H1 (cell line): ENCODE measurements at regions of chr7 and their contacts with region 1.

Region 1: DNA sequence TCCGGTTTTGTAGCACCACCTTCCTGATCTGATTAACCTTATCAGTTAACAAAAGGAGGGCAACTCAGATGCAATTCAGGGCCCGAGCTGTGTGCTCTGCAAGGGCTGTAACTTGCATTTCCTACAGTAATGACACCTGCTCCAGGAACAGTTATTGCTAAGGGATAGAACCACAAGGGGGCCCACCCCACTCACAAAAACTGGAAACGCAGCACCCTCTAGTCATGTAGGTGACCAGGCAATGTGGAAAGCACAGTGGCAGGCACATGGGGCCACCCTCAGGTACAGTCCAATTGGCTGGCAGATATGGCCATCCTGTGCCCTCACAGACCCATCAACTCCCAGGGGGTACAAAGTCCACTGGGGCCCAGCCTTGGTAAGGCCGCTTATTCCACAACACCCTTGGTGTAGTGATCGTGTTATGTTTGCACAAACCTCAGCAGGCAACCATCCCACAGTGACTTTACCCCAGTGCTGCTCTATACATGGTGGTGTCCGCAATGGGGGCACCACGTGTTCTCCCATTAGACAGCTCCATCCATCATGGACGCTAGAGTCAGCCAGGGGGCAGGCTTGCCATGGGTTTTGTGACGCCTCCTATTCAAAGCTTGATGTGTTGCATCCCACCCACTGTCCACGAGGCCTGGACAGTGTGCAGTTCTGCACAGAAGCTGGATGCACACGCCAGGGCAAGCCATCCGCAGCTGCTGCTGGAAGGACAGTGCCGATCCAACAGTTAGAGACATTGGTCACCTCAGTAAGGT is 9.4 kb downstream of the RNF133 start:
- DNase-seq: no peak
- H3K4me3 ChIP-seq: no peak overlapping the region
- H3K27ac ChIP-seq: no peak overlapping the region
- H3K4me1 ChIP-seq: peaks cover 4 to 14% (median 11%) of the 10 kb centered on the region in 4 experiments; a peak in 6 of 7 replicates
- H3K27me3 ChIP-seq: no peaks in the 10 kb centered on the region
- CTCF ChIP-seq: peak; percentile 17 to 34 (median 24); a peak in 3 of 4 replicates
- EP300 ChIP-seq: no peak
- POLR2A ChIP-seq: no peak
- RAD21 ChIP-seq: peak; percentile 51 to 67

Region 2: DNA sequence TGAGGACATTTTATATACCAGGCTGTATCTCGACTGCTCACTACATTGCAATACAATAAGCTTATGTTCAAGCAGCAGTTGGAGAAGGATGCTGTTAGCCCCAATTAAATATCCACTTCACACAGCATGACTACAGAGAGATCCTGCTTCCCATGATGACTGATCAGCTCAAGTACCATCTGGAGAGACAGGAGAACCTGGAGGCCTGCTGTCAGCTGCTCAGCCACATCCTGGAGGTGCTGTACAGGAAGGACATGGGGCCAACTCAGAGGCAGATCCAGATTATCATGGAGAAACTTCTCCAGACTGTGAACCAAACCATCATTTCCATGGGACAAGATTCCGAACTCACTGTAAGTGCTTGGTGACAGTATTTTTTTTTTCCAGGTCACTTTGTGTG is 13.1 kb before region 1 on chr7:
- CTCF ChIA-PET with region 1: interaction called, 10 read pairs
- POLR2A ChIA-PET with region 1: interaction called, 4 read pairs
- DNase-seq: no peak
- H3K4me3 ChIP-seq: no peak overlapping the region
- H3K27ac ChIP-seq: 0 out of 2 replicates have a peak overlapping the region, but pooled peaks have one; percentile 4
- H3K4me1 ChIP-seq: peaks cover 6 to 30% (median 19%) of the 10 kb centered on the region in 4 experiments
- H3K27me3 ChIP-seq: peaks cover 0 to 2% (median 0%) of the 10 kb centered on the region in 4 experiments; a peak in 1 of 7 replicates
- CTCF ChIP-seq: no peak
- EP300 ChIP-seq: no peak
- POLR2A ChIP-seq: no peak
- RAD21 ChIP-seq: no peak

Region 3: DNA sequence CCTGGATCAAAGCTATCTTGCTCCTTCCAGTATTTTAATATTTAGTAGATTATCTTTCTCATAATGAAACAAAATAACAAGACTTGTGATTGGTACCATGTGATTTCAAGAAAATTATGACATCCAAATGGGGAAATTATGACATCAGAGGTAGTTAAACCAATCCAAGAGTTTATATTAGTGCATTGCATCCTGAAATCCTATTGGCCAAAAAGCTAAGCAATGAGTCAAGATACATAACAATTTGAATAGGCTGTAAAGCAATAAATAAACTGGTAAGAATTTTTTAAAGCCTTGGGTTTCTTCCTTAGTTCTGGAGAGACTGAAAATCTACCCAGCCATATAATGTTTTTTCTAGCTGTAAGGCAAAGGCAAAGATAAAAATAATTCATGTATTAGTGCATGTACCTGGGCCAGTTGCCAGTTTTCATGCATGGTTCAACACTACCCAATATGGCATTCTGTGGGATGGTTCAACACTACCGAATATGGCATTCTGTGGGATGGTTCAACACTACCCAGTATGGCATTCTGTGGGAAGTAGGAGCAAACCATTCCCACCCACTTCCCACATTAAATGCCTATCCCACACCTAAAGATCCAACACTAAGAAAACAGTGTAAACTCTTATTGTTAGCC is 13.5 kb after region 1 on chr7 and contains the start of gene RNF148:
- CTCF ChIA-PET with region 1: interaction called, 35 read pairs
- POLR2A ChIA-PET with region 1: no interaction called
- DNase-seq: no peak
- H3K4me3 ChIP-seq: no peak within 1 kb of the TSS
- H3K27ac ChIP-seq: no peak within 1 kb of the TSS
- H3K4me1 ChIP-seq: peaks cover 0 to 3% (median under 1%) of the 10 kb centered on the region in 4 experiments; a peak in 2 of 7 replicates
- H3K27me3 ChIP-seq: no peaks in the 10 kb centered on the region
- CTCF ChIP-seq: no peak
- EP300 ChIP-seq: no peak
- POLR2A ChIP-seq: no peak
- RAD21 ChIP-seq: no peak
- total RNA-seq, gene RNF148: 0.45 TPM in 1 of 2 replicates, not detected in the other